Vagina (tissue), 2 donors: ENCODE measurements at regions of chr12 and their contacts with region 1.

Region 1: DNA sequence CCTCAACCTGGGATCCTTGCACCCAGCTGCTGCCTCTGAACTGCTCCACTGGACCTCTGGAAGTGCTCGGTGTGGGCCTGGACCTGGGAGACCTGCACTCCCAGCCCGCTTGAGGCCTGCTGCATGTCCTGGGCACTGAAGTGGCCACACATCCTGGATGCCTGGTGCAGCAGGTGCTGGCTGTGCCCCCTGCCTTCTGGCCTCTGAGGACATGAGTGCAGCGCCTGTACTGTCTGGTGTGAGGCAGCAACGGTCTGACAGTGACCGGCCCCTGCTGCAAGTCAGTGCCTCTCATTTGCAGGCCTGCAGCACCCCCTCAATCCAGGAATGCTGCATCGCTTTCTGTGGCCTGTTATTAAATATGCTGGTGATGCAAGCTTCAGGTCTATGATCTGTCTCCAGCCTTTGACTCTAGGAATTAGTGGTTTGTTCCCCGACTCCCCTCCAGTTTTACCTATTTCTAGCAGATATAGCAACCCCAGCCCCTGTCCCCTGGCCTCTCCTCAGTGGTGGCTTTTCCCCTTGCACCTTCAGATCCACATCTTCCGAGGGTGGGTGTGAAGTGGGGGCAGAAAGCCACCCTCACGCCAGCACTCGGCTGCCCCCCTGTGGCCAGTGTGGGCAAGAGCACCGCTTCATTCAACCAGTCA is 3.6 kb downstream of the SMIM41 start:
- DNase-seq: peak in 1 of 2 donors; percentile 88
- H3K4me3 ChIP-seq: no peak overlapping the region
- H3K27ac ChIP-seq: peak overlapping the region; percentile 68
- H3K4me1 ChIP-seq: peaks cover 33% of the 10 kb centered on the region
- H3K27me3 ChIP-seq: no peaks in the 10 kb centered on the region
- CTCF ChIP-seq: peak; percentile 96 to 97 (median 97)
- POLR2A ChIP-seq: no peak

Region 2: DNA sequence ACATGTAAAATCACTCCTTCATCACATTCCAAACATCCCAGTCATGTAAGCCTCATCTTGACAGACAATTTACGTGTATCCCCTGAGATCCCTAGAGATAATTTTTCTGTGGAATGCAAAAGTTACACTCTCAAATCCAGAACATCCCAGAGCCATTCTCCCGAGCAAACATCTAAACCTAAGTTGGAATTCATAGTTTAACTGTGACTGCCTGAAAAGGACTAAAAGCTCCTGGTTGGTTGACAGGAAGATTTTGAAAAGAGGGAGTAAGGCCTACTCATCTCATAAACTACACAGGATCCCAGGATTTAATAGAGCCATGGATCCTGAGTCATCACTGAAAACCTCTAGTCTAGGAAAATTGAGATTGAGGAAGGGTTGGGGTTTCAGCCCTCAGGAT is 368.4 kb before region 1 on chr12:
- intact Hi-C with region 1: no loop called
- DNase-seq: no peak
- H3K4me3 ChIP-seq: no peak overlapping the region
- H3K27ac ChIP-seq: no peak overlapping the region
- H3K4me1 ChIP-seq: no peaks in the 10 kb centered on the region
- H3K27me3 ChIP-seq: no peaks in the 10 kb centered on the region
- CTCF ChIP-seq: no peak
- POLR2A ChIP-seq: no peak

Region 3: DNA sequence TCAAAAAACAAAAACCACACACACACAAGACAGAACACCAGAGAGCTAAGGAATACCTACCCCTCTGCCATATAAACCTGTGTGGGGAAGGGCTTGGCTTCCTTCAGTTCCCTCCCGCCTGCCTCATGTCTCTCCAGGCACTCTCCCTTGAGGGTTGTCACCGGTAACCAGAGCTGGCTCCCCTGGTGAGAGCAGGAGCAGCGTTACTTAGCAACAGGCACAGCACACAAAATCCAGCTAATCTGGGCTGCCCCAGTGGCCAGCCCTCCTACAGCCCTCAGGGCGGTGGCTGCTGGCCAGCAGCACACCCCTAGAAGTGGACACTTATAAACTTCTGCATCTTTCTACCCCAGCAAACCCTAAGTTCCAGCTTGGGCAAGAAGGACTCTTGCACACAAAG is 53.4 kb before region 1 on chr12:
- intact Hi-C with region 1: loop called (anchors 5 kb)
- DNase-seq: no peak
- H3K4me3 ChIP-seq: no peak overlapping the region
- H3K27ac ChIP-seq: no peak overlapping the region
- H3K4me1 ChIP-seq: peaks cover 29% of the 10 kb centered on the region
- H3K27me3 ChIP-seq: no peaks in the 10 kb centered on the region
- CTCF ChIP-seq: no peak
- POLR2A ChIP-seq: no peak

Region 4: DNA sequence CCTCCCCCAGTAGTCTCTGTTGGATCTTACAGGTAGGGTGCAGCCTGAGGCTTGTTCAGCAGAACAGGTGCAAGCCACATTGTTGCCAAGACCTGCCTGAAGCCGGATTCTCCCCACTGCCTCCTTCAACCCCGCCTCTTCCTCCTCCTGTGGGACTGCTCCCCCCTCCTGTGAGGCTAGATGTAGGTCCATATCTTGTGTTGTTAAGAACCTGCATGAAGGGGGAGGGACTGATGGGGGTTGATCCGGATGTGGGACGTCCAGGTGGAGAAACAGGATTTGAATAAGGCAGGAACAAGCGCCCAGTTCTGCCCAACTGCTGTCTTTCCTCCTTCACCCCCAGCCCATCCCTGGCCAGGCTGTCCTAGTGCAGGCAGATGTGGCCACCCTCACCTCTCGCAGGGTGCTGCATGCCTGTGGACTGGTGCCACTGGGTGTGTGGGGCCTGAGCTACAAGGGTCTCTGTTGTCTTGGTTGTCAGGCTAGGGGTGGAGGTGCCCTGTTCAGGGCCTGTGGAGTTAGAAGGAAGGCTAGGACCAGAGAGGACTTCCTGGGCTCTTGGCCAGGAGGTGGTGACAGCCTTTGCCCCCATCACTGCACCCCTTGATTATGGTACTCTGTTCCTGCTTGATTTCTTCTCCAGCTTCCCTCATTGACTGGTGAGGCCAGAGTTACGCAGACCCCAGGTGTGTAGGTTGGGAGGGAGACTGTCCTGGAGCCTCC is 30.5 kb before region 1 on chr12:
- intact Hi-C with region 1: loop called (anchors 2 kb)
- DNase-seq: peak in 1 of 2 donors; percentile 92
- H3K4me3 ChIP-seq: peak overlapping the region; percentile 53 to 77
- H3K27ac ChIP-seq: peak overlapping the region; percentile 99
- H3K4me1 ChIP-seq: peaks cover 24% of the 10 kb centered on the region
- H3K27me3 ChIP-seq: no peaks in the 10 kb centered on the region
- CTCF ChIP-seq: no peak
- POLR2A ChIP-seq: no peak